ENCODE measurements at regions of chr10 and their contacts with region 1.

Region 1: DNA sequence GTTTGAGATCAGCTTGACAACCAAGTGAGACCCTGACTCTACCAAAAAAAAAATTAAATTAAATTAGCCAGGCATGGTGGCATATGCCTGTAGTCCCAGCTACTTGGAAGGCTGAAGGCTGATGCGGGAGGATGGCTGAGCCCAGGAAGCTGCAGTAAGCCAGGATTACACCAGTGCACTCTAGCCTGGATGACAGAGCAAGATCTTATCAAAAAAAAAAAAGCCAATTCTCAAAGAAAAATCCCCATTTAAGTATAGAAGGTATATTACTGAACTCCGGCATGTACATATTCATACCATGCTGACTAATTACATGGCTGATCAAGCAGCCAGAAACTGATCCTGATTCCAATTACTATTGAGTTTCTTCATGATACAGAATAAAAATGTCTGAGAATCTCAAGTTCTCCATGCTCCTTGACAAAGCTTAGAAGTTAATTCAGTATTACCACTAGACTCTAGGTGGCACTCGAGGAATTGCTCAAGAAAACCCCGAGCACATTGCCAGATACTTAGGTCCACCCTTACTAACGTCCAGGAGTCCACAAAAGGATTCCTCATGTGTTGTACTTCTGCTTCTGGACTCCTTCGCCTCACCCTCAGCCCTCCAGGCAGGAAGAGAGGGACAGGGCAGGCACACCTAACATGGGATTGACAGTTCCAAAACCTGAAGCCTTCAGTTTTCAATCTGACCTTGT is 148.9 kb downstream of the PARD3 start:
- DNase-seq: peak; percentile 42 to 76 (median 61)
- H3K4me3 ChIP-seq: no peak overlapping the region
- H3K27ac ChIP-seq: no peak overlapping the region
- H3K4me1 ChIP-seq: peaks cover 0 to 9% of the 10 kb centered on the region in 2 donors
- H3K27me3 ChIP-seq: no peaks in the 10 kb centered on the region
- CTCF ChIP-seq: peak; percentile 18 to 75 (median 66)
- POLR2A ChIP-seq: no peak

Region 2: DNA sequence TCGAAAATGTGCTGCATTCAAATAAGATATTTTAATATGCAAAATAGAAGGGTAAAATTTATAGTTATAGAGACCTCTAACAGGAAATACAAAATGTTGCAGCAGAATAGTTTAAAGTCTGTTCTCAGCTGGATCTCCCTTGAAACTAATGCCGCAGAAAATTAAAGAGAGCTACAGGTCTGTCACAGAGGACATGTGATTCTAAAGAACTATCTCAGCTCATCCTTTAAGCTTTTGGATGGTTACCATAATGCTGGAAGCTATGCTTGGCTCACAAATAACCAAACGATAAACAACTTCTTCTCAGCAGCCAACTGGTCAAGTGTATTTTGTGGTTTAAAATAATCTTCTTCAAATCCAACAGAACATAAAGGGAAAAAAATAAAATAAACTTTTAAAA is 204.1 kb before region 1 on chr10:
- intact Hi-C with region 1: no loop called
- DNase-seq: no peak
- H3K4me3 ChIP-seq: no peak overlapping the region
- H3K27ac ChIP-seq: no peak overlapping the region
- H3K4me1 ChIP-seq: no peaks in the 10 kb centered on the region
- H3K27me3 ChIP-seq: no peaks in the 10 kb centered on the region
- CTCF ChIP-seq: no peak
- POLR2A ChIP-seq: no peak

Region 3: GRCh38 chr10:34723750-34724149 is 57.6 kb after region 1 on chr10:
- intact Hi-C with region 1: loop called in 1 of 2 experiments (anchors 10 kb)
- DNase-seq: peak; percentile 40 to 79 (median 56)
- H3K4me3 ChIP-seq: no peak overlapping the region
- H3K27ac ChIP-seq: peak overlapping the region in 1 of 5 donors; percentile 53
- H3K4me1 ChIP-seq: peaks cover 0 to 25% of the 10 kb centered on the region in 2 donors
- H3K27me3 ChIP-seq: no peaks in the 10 kb centered on the region
- CTCF ChIP-seq: peak; percentile 30 to 68 (median 50)
- POLR2A ChIP-seq: no peak

Region 4: DNA sequence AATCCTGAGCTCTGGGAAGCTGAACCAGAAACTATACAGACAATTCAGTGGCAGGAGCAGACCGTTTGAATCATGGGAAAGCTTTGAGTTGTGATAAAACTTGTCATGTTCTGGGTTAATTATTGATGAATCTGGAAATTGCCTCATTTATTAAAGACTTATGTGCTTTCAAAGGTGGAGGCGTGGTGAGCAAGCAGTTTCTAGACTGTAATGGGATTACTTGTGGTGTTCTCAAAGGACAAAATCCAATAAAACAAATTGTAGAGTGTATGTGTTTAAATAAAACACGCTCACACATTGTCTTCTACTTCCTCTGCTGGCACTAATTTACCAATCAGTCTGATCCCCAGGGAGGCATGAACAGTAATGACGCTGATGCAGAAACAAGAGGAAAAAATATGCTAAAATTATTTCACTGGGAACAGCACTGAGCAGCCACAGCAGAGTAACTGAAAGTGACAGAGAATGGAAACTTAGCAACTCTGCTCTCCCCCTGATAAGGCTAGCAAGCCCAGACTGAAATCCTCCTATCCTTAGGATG is 123.9 kb after region 1 on chr10:
- intact Hi-C with region 1: loop called in 1 of 2 experiments (anchors 10 kb)
- DNase-seq: no peak
- H3K4me3 ChIP-seq: no peak overlapping the region
- H3K27ac ChIP-seq: peak overlapping the region in 1 of 5 donors; percentile 36
- H3K4me1 ChIP-seq: peaks cover 13 to 30% of the 10 kb centered on the region in 2 donors
- H3K27me3 ChIP-seq: no peaks in the 10 kb centered on the region
- CTCF ChIP-seq: no peak
- POLR2A ChIP-seq: no peak

Region 5: GRCh38 chr10:34815185-34816084 is 149.3 kb after region 1 on chr10 and contains the start of gene PARD3:
- intact Hi-C with region 1: loop called in 1 of 2 experiments (anchors 10 kb)
- DNase-seq: peak; percentile 67 to 81 (median 74)
- H3K4me3 ChIP-seq: peak within 1 kb of the TSS; percentile 53 to 81 (median 70)
- H3K27ac ChIP-seq: peak within 1 kb of the TSS in 4 of 5 donors; percentile 65 to 93 (median 78)
- H3K4me1 ChIP-seq: peaks cover 3 to 40% of the 10 kb centered on the region in 2 donors
- H3K27me3 ChIP-seq: no peaks in the 10 kb centered on the region
- CTCF ChIP-seq: no peak
- POLR2A ChIP-seq: peak in 1 of 2 donors; percentile 23
- total RNA-seq, gene PARD3: 32.8 to 81.1 (median 47.9) TPM

Measured in adrenal gland (tissue), 19 donors.